Mammary epithelial cell (primary cell): ENCODE measurements at regions of chr3 and their contacts with region 1.

Region 1: DNA sequence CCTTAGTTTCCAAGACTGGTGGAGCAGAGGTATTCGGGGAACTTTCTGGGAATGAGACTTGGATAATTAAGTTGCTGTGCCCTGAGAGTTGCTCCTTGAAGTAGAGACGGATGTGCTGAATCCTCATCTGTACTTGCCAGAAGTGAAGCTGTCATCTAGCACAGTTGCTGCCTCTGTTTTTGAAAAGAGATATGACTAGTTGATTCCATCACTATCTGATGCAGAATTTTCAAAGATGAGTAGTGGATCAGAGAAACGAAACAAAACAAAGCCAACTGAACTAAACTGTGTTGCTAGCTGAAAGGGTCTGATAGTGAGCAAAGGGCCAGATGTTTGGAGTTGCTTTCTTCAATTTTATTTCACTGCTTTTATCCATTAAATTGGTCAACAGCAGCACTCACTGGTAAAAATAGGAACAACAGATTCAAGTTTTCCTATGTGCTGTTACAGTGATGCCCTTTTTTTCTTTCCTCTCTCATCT is 52.7 kb downstream of the MITF start:
- DNase-seq: peak; percentile 35
- H3K4me3 ChIP-seq: no peak overlapping the region
- H3K27ac ChIP-seq: no peak overlapping the region
- H3K4me1 ChIP-seq: peaks cover 21% of the 10 kb centered on the region
- H3K27me3 ChIP-seq: no peaks in the 10 kb centered on the region
- CTCF ChIP-seq: peak; percentile 59 to 71

Region 2: GRCh38 chr3:69439643-69440270 is 352.2 kb before region 1 on chr3:
- CTCF ChIA-PET with region 1: no interaction called
- dilution Hi-C with region 1: no loop called
- in situ Hi-C with region 1: no loop called
- intact Hi-C with region 1: loop called (anchors 5 kb)
- DNase-seq: no peak
- H3K4me3 ChIP-seq: no peak overlapping the region
- H3K27ac ChIP-seq: no peak overlapping the region
- H3K4me1 ChIP-seq: no peaks in the 10 kb centered on the region
- H3K27me3 ChIP-seq: no peaks in the 10 kb centered on the region
- CTCF ChIP-seq: peak; percentile 66 to 70

Region 3: GRCh38 chr3:69691860-69692259 is 100.1 kb before region 1 on chr3:
- CTCF ChIA-PET with region 1: interaction called, 6 read pairs
- dilution Hi-C with region 1: loop called (anchors 5 kb)
- in situ Hi-C with region 1: loop called (anchors 5 to 10 kb)
- intact Hi-C with region 1: loop called (anchors 1 kb)
- DNase-seq: no peak
- H3K4me3 ChIP-seq: no peak overlapping the region
- H3K27ac ChIP-seq: no peak overlapping the region
- H3K4me1 ChIP-seq: no peaks in the 10 kb centered on the region
- H3K27me3 ChIP-seq: no peaks in the 10 kb centered on the region
- CTCF ChIP-seq: no peak

Region 4: GRCh38 chr3:69855436-69856162 is 63.6 kb after region 1 on chr3:
- CTCF ChIA-PET with region 1: no interaction called
- dilution Hi-C with region 1: no loop called
- in situ Hi-C with region 1: no loop called
- intact Hi-C with region 1: loop called (anchors 5 kb)
- DNase-seq: peak; percentile 23
- H3K4me3 ChIP-seq: no peak overlapping the region
- H3K27ac ChIP-seq: no peak overlapping the region
- H3K4me1 ChIP-seq: no peaks in the 10 kb centered on the region
- H3K27me3 ChIP-seq: peaks cover 2% of the 10 kb centered on the region
- CTCF ChIP-seq: peak; percentile 32 to 57